HepG2 (cell line): ENCODE measurements at regions of chr2 and their contacts with region 1.

Region 1: DNA sequence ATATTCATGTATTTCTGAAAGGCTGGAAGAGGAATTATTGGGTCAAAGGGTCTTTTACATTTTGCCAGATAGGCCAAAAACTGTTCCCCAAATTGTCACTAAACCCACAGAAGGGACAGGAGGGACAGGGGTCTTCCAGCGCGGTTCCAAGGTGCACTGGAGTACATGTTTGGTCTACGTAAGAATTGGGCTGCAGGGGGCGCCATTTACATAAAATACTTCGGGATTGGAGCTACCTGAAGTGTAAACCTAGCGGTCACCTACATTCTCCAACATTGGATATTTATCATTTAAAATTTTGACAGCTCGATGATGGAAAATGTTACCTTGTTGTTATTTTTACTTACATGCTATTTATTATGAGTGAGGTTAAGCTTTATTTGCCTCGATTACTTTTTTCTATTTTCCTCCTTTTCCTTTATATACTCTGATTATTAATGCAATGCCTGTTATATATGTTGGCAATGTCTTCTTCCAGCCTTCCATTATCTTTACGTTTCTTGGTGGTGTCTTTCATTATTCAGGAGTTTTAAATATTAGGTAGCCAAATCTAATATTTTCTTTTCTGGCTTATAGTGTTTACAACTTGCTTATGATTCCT is 43.0 kb upstream of the RAB6C start:
- DNase-seq: peak; percentile 54
- ATAC-seq: peak; percentile 82
- H3K4me3 ChIP-seq: no peak overlapping the region
- H3K27ac ChIP-seq: no peak overlapping the region
- H3K4me1 ChIP-seq: no peaks in the 10 kb centered on the region
- H3K27me3 ChIP-seq: peaks cover 5 to 32% of the 10 kb centered on the region in 2 experiments; a peak in 3 of 5 replicates
- CTCF ChIP-seq: peak; percentile 66
- EP300 ChIP-seq: no peak
- POLR2A ChIP-seq: no peak
- RAD21 ChIP-seq: no peak; the same call in 1 of the 2 replicates

Region 2: DNA sequence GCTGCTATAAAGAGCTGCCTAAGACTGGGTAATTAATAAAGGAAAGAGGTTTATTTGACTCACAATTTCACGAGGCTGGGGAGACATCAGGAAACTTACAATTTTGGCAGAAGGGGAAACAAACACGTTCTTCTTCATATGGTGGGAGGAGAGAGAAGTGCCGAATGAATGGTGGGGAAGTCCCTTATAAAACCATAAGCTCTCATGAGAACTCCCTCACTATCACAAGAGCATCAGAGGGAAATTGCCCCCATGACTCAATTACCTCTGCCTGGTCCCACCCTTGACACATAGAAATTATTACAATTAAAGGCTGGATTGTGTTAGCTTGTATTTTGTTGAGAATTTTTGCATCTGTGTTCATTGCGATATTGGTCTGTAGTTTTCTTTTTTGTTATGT is 417.5 kb before region 1 on chr2:
- CTCF ChIA-PET with region 1: no interaction called
- POLR2A ChIA-PET with region 1: no interaction called
- in situ Hi-C with region 1: no loop called
- intact Hi-C with region 1: no loop called
- DNase-seq: no peak
- ATAC-seq: no peak
- H3K4me3 ChIP-seq: no peak overlapping the region
- H3K27ac ChIP-seq: no peak overlapping the region
- H3K4me1 ChIP-seq: no peaks in the 10 kb centered on the region
- H3K27me3 ChIP-seq: no peaks in the 10 kb centered on the region
- CTCF ChIP-seq: no peak
- EP300 ChIP-seq: no peak
- POLR2A ChIP-seq: no peak
- RAD21 ChIP-seq: no peak

Region 3: GRCh38 chr2:129777762-129778582 is 158.5 kb before region 1 on chr2:
- CTCF ChIA-PET with region 1: no interaction called
- POLR2A ChIA-PET with region 1: no interaction called
- in situ Hi-C with region 1: no loop called
- intact Hi-C with region 1: no loop called
- DNase-seq: no peak
- ATAC-seq: no peak
- H3K4me3 ChIP-seq: no peak overlapping the region
- H3K27ac ChIP-seq: no peak overlapping the region
- H3K4me1 ChIP-seq: 0 out of 2 replicates have a peak, but pooled peaks cover 9% of the 10 kb centered on the region
- H3K27me3 ChIP-seq: peaks cover 15 to 49% of the 10 kb centered on the region in 2 experiments
- CTCF ChIP-seq: no peak
- EP300 ChIP-seq: no peak
- POLR2A ChIP-seq: no peak
- RAD21 ChIP-seq: no peak

Region 4: DNA sequence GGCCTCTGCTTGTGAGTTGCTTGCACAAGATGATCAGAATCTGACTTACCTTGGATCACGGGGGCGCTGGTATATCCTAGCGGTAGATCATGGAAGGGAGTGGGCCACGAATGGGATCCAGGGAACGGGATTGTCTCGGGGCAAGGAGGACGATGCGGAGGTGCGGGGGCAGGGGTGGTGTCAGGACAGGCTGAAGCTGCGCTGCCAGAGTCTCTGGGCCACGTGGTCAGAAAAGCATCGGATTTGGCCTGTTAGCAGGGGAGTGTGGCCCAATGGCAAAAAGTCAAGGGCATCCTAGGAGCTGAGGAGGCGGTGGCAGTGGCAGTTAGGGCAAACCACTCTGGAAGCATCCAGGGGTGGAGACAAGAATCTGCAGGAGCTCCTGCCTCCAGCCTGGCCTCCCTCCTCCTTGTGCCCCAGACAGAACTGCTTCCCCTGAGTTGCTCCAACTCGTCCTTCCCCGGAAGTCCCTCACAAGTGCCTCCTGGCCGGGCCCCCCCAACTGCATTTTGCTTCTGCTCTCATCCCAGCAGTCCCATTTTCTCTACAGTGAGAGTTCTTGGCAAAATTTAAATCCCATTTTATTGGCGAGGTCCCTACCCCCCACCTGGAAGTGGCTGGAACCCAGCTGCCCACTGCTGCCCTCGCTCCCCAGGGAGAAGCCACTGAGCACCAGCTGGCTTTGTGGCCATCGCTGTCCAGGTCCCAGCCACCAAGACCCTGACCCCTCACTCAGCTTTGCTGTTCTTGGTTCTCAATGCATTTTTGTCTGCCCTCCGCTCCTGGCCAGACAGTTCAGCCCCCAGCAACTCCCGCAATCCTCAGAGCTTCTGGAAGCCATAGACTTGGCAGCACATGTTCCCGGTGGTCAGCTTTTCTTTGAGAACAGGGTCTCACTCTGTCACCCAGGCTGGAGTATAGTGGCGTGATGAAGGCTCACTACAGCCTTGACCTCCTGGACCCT is 214.0 kb after region 1 on chr2:
- CTCF ChIA-PET with region 1: no interaction called
- POLR2A ChIA-PET with region 1: no interaction called
- in situ Hi-C with region 1: no loop called
- intact Hi-C with region 1: loop called (anchors 5 kb)
- DNase-seq: no peak
- ATAC-seq: no peak
- H3K4me3 ChIP-seq: no peak overlapping the region
- H3K27ac ChIP-seq: no peak overlapping the region
- H3K4me1 ChIP-seq: no peaks in the 10 kb centered on the region
- H3K27me3 ChIP-seq: no peaks in the 10 kb centered on the region
- CTCF ChIP-seq: no peak
- EP300 ChIP-seq: no peak
- POLR2A ChIP-seq: no peak
- RAD21 ChIP-seq: no peak